Activated naive CD8-positive, alpha-beta T cell treated with anti-CD3 and anti-CD28 coated beads, Interleukin-2, amount 10 ng/mL, durations not matched to agents 7 days and 5 days (primary cell): ENCODE measurements at regions of chr2 and their contacts with region 1.

Region 1: GRCh38 chr2:6917071-6917760 is at the start of gene RNF144A:
- DNase-seq: peak; percentile 95
- ATAC-seq: peak; percentile 74
- H3K4me3 Mint-ChIP-seq: peak within 1 kb of the TSS; percentile 88
- H3K27ac Mint-ChIP-seq: peak within 1 kb of the TSS; percentile 91
- H3K4me1 Mint-ChIP-seq: peaks cover 67% of the 10 kb centered on the region
- H3K27me3 Mint-ChIP-seq: no peaks in the 10 kb centered on the region
- total RNA-seq, gene RNF144A: 78.7 to 91.1 TPM

Region 2: GRCh38 chr2:6896930-6897759 is 20.1 kb before region 1 on chr2:
- POLR2A ChIA-PET with region 1: interaction called, 14 read pairs
- DNase-seq: no peak
- ATAC-seq: no peak
- H3K4me3 Mint-ChIP-seq: no peak overlapping the region
- H3K27ac Mint-ChIP-seq: peak overlapping the region; percentile 35
- H3K4me1 Mint-ChIP-seq: peaks cover 20% of the 10 kb centered on the region
- H3K27me3 Mint-ChIP-seq: no peaks in the 10 kb centered on the region

Region 3: GRCh38 chr2:6929196-6929819 is 12.1 kb after region 1 on chr2:
- POLR2A ChIA-PET with region 1: interaction called, 13 read pairs
- DNase-seq: no peak
- ATAC-seq: peak; percentile 41
- H3K4me3 Mint-ChIP-seq: peak overlapping the region; percentile 28
- H3K27ac Mint-ChIP-seq: no peak overlapping the region
- H3K4me1 Mint-ChIP-seq: peaks cover 51% of the 10 kb centered on the region
- H3K27me3 Mint-ChIP-seq: no peaks in the 10 kb centered on the region

Region 4: GRCh38 chr2:6968319-6969100 is 51.3 kb after region 1 on chr2:
- POLR2A ChIA-PET with region 1: no interaction called
- DNase-seq: no peak
- ATAC-seq: no peak
- H3K4me3 Mint-ChIP-seq: no peak overlapping the region
- H3K27ac Mint-ChIP-seq: no peak overlapping the region
- H3K4me1 Mint-ChIP-seq: peaks cover 17% of the 10 kb centered on the region
- H3K27me3 Mint-ChIP-seq: no peaks in the 10 kb centered on the region

Region 5: DNA sequence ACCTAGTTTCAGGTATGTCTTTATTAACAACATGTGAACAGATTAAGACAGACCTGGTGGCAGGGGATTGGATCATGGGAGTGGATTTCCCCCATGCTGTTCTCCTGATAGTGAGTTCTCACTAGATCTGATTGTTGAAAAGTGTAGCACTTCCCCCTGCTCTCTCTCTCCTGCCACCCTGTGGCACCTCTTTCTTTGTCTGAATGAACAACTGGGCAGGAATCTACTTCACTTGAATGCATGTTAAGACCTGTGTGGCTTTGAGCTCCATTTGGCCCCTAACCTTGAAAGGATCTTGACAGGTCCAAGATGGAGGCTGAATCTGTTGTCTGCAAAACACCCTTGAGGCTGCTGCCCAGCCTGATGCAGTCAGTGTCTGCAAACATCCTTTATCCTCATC is 194.4 kb after region 1 on chr2:
- POLR2A ChIA-PET with region 1: no interaction called
- DNase-seq: no peak
- ATAC-seq: no peak
- H3K4me3 Mint-ChIP-seq: no peak overlapping the region
- H3K27ac Mint-ChIP-seq: no peak overlapping the region
- H3K4me1 Mint-ChIP-seq: peaks cover 4% of the 10 kb centered on the region
- H3K27me3 Mint-ChIP-seq: no peaks in the 10 kb centered on the region